GM12878 (cell line): ENCODE measurements at regions of chr10 and their contacts with region 1.

Region 1: GRCh38 chr10:59240582-59241183 is 64.2 kb downstream of the PHYHIPL start:
- DNase-seq: no peak
- ATAC-seq: peak; percentile 31; the same call in 1 of the 3 replicates
- H3K4me3 ChIP-seq: no peak overlapping the region
- H3K27ac ChIP-seq: no peak overlapping the region
- H3K4me1 ChIP-seq: no peaks in the 10 kb centered on the region
- H3K27me3 ChIP-seq: no peaks in the 10 kb centered on the region
- CTCF ChIP-seq: peak; percentile 30 to 50 (median 48); a peak in 4 of 6 replicates
- EP300 ChIP-seq: no peak
- POLR2A ChIP-seq: no peak
- RAD21 ChIP-seq: peak; percentile 64

Region 2: DNA sequence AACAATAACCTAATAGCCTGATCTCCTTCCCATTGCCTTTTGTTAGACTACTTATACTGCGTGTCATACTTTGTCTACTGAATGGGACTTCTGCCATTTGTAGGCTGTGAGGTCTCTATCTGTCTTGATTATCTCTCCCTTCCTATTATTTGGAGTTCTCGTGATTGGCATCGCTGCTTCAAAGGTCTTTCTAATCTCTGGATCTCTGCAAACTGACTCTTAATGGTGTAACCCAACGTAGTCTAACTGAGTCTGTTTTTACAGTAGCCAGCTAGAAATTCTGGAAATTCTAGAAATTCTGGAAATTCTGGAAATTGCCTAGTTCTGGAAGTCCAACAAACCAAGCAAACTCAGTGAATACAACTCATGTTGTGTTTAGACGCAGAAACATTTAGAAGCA is 34.4 kb before region 1 on chr10:
- CTCF ChIA-PET with region 1: no interaction called
- POLR2A ChIA-PET with region 1: no interaction called
- RAD21 ChIA-PET with region 1: no interaction called
- SMC1A ChIA-PET with region 1: no interaction called
- in situ Hi-C with region 1: no loop called
- intact Hi-C with region 1: no loop called
- DNase-seq: no peak
- ATAC-seq: no peak
- H3K4me3 ChIP-seq: no peak overlapping the region
- H3K27ac ChIP-seq: no peak overlapping the region
- H3K4me1 ChIP-seq: no peaks in the 10 kb centered on the region
- H3K27me3 ChIP-seq: no peaks in the 10 kb centered on the region
- CTCF ChIP-seq: no peak
- EP300 ChIP-seq: no peak
- POLR2A ChIP-seq: no peak
- RAD21 ChIP-seq: no peak

Region 3: DNA sequence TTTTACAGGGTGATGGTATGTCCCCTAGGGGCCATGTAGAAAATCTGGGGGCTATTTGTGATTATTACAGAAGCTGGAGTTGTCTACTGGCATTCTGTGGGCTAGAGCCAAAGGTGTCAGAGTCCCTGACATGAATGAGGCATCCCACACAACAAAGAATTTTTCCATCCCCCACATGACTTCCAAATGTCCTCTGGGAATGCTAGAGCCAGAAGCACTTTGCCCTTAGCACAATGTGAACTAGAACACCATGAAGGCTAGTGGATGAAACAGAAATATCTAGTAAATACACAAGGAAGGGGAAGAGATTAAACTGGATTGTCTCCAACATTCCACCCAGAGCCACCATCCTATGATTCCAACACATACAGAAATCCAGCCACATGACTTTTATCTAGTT is 74.8 kb after region 1 on chr10:
- CTCF ChIA-PET with region 1: no interaction called
- POLR2A ChIA-PET with region 1: no interaction called
- RAD21 ChIA-PET with region 1: no interaction called
- SMC1A ChIA-PET with region 1: no interaction called
- in situ Hi-C with region 1: no loop called
- intact Hi-C with region 1: no loop called
- DNase-seq: no peak
- ATAC-seq: no peak
- H3K4me3 ChIP-seq: no peak overlapping the region
- H3K27ac ChIP-seq: no peak overlapping the region
- H3K4me1 ChIP-seq: no peaks in the 10 kb centered on the region
- H3K27me3 ChIP-seq: no peaks in the 10 kb centered on the region; a peak in 2 of 4 replicates
- CTCF ChIP-seq: no peak
- EP300 ChIP-seq: no peak
- POLR2A ChIP-seq: no peak
- RAD21 ChIP-seq: no peak

Region 4: GRCh38 chr10:59465088-59465487 is 224.4 kb after region 1 on chr10:
- CTCF ChIA-PET with region 1: no interaction called
- POLR2A ChIA-PET with region 1: no interaction called
- RAD21 ChIA-PET with region 1: no interaction called
- SMC1A ChIA-PET with region 1: no interaction called
- in situ Hi-C with region 1: no loop called
- intact Hi-C with region 1: loop called (anchors 10 kb)
- DNase-seq: no peak
- ATAC-seq: no peak
- H3K4me3 ChIP-seq: no peak overlapping the region
- H3K27ac ChIP-seq: no peak overlapping the region
- H3K4me1 ChIP-seq: no peaks in the 10 kb centered on the region
- H3K27me3 ChIP-seq: no peaks in the 10 kb centered on the region
- CTCF ChIP-seq: peak in 1 of 3 experiments; percentile 19; a peak in 1 of 6 replicates
- EP300 ChIP-seq: no peak
- POLR2A ChIP-seq: no peak
- RAD21 ChIP-seq: no peak

Region 5: GRCh38 chr10:59580026-59580863 is 339.6 kb after region 1 on chr10:
- CTCF ChIA-PET with region 1: interaction called, 5 read pairs
- POLR2A ChIA-PET with region 1: no interaction called
- RAD21 ChIA-PET with region 1: no interaction called
- SMC1A ChIA-PET with region 1: no interaction called
- in situ Hi-C with region 1: no loop called
- intact Hi-C with region 1: loop called (anchors 5 kb)
- DNase-seq: no peak
- ATAC-seq: no peak
- H3K4me3 ChIP-seq: no peak overlapping the region
- H3K27ac ChIP-seq: no peak overlapping the region
- H3K4me1 ChIP-seq: no peaks in the 10 kb centered on the region
- H3K27me3 ChIP-seq: no peaks in the 10 kb centered on the region
- CTCF ChIP-seq: peak; percentile 18 to 37 (median 20); a peak in 3 of 6 replicates
- EP300 ChIP-seq: no peak
- POLR2A ChIP-seq: no peak
- RAD21 ChIP-seq: peak; percentile 63